ENCODE measurements at regions of chr19 and their contacts with region 1.

Region 1: GRCh38 chr19:46990991-46991676 is 28.5 kb upstream of the NPAS1 start:
- ATAC-seq: peak; percentile 78 to 93 (median 88)
- H3K4me3 ChIP-seq: no peak overlapping the region
- H3K27ac ChIP-seq: peak overlapping the region; percentile 25 to 40
- H3K4me1 ChIP-seq: peaks cover 9 to 10% of the 10 kb centered on the region in 2 donors

Region 2: GRCh38 chr19:46753420-46754155 is 237.5 kb before region 1 on chr19:
- in situ Hi-C with region 1: loop called in 1 of 9 experiments (anchors 25 kb)
- ATAC-seq: peak in 4 of 8 experiments; percentile 24 to 59 (median 54)
- H3K4me3 ChIP-seq: no peak overlapping the region
- H3K27ac ChIP-seq: no peak overlapping the region
- H3K4me1 ChIP-seq: no peaks in the 10 kb centered on the region

Region 3: DNA sequence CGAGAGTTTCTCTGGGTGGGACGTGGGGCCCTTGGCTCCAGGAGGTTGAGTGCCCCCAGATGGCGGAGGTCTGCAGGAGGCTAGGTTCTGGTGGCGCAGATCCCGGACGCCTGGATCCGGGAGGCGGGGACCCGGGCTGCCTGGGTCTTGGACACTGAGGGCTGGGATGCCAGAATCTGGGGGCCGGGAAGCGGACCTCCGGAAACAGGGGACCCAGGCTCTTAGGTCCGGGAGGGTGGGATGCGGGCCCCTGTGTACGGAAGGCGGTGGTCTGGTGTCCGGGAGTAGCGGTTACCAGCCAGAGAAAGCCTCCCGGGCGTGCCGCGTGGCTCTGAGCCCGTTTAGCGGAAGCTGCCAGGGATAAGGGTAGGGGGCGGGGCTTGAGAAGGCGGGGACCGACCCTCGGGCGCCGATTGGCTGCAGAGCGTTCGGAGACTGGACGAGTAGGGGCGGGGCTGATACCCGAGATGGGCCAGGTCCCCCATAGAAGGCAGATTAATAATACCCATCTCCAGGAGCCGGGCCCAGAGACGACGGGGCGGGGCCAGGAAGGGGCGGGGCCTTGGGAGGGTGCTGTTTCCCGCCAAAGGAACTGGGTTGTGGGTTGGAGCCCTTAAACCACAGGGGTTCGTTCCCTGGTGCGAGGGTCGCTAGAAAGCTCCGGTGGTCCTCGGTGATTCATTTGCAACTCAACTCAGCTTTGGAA is 202.7 kb before region 1 on chr19 and contains the start of gene SLC1A5:
- in situ Hi-C with region 1: no loop called
- ATAC-seq: peak; percentile 37 to 79 (median 72)
- H3K4me3 ChIP-seq: peak within 1 kb of the TSS; percentile 57 to 88 (median 73)
- H3K27ac ChIP-seq: peak within 1 kb of the TSS; percentile 92 to 95
- H3K4me1 ChIP-seq: peaks cover 18 to 25% of the 10 kb centered on the region in 2 donors
- total RNA-seq, gene SLC1A5: 54.6 to 98.0 (median 77.7) TPM

Region 4: GRCh38 chr19:46850228-46851203 is 140.6 kb before region 1 on chr19 and contains the start of gene AP2S1:
- in situ Hi-C with region 1: loop called in 6 of 9 experiments (anchors 10 to 25 kb)
- ATAC-seq: peak; percentile 87 to 95 (median 93)
- H3K4me3 ChIP-seq: peak within 1 kb of the TSS; percentile 48 to 67 (median 56)
- H3K27ac ChIP-seq: peak within 1 kb of the TSS; percentile 64 to 75
- H3K4me1 ChIP-seq: peaks cover 3 to 5% of the 10 kb centered on the region in 2 donors
- total RNA-seq, gene AP2S1: 115 to 265 (median 145) TPM

Region 5: GRCh38 chr19:47398707-47399597 is 407.8 kb after region 1 on chr19:
- in situ Hi-C with region 1: no loop called
- ATAC-seq: peak in 1 of 8 experiments; percentile 17
- H3K4me3 ChIP-seq: no peak overlapping the region
- H3K27ac ChIP-seq: no peak overlapping the region
- H3K4me1 ChIP-seq: peaks cover 2% of the 10 kb centered on the region in 2 donors

Measured in motor neuron (in vitro differentiated cells).